ENCODE measurements at regions of chr7 and their contacts with region 1.

Region 1: GRCh38 chr7:82572195-82572880 is 128.8 kb upstream of the CACNA2D1 start:
- DNase-seq: peak; percentile 88
- ATAC-seq: peak; percentile 39
- H3K4me3 Mint-ChIP-seq: no peak overlapping the region
- H3K27ac Mint-ChIP-seq: no peak overlapping the region
- H3K4me1 Mint-ChIP-seq: peaks cover 4% of the 10 kb centered on the region
- H3K27me3 Mint-ChIP-seq: peaks cover 2% of the 10 kb centered on the region
- CTCF ChIP-seq: peak; percentile 85

Region 2: DNA sequence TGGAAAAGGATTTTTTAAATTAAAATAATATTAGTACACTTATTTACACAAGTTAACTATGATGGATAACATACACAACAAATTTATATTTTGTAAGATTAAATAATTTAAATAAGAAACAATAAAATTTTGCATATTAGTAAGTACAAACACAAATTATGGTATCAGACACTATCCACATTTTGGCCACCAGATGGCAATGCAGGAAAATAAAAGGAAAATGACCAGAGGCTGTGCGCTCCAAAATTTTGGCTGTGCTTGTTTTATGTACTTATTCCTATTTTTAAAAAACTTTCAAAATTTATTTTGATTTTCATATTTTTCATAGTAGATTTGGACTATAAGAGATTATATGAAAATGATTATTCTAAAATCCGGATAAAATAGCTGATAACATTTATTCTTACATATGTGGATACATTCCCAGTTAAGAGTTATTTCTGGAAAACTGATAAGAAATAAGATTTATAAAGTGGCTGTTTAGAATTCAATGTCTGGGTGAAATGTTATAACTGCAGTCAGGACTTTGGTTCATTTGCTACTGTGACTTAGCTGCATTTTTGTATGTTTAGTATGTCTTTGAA is 527.7 kb before region 1 on chr7:
- CTCF ChIA-PET with region 1: interaction called, 19 read pairs
- POLR2A ChIA-PET with region 1: no interaction called
- intact Hi-C with region 1: loop called (anchors 10 kb)
- DNase-seq: peak; percentile 37
- ATAC-seq: no peak
- H3K4me3 Mint-ChIP-seq: no peak overlapping the region
- H3K27ac Mint-ChIP-seq: no peak overlapping the region
- H3K4me1 Mint-ChIP-seq: no peaks in the 10 kb centered on the region
- H3K27me3 Mint-ChIP-seq: peaks cover 2% of the 10 kb centered on the region
- CTCF ChIP-seq: peak; percentile 69

Region 3: DNA sequence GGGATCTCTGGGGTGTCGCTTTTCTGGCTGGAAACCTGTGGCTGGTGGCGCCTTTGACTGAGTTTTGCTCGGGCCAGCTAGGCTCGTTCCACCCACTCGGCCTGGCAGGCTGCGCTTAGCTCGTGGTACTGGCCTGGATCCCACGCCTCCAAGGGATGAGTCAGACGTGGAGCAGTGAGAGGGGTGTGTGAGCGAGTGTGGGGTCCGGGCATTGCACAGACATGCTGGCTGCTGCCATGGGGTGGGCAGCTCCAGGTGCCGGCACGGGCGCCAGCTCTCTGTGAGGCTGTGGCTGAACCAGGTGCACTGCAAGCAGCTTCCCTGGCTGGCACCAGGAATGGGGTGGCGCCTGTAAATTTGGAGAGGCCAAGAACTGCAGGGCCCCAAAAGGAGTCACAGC is 65.6 kb before region 1 on chr7:
- CTCF ChIA-PET with region 1: no interaction called
- POLR2A ChIA-PET with region 1: no interaction called
- intact Hi-C with region 1: no loop called
- DNase-seq: no peak
- ATAC-seq: no peak
- H3K4me3 Mint-ChIP-seq: no peak overlapping the region
- H3K27ac Mint-ChIP-seq: no peak overlapping the region
- H3K4me1 Mint-ChIP-seq: no peaks in the 10 kb centered on the region
- H3K27me3 Mint-ChIP-seq: peaks cover 7% of the 10 kb centered on the region
- CTCF ChIP-seq: no peak